ENCODE measurements at regions of chr2 and their contacts with region 1.

Region 1: DNA sequence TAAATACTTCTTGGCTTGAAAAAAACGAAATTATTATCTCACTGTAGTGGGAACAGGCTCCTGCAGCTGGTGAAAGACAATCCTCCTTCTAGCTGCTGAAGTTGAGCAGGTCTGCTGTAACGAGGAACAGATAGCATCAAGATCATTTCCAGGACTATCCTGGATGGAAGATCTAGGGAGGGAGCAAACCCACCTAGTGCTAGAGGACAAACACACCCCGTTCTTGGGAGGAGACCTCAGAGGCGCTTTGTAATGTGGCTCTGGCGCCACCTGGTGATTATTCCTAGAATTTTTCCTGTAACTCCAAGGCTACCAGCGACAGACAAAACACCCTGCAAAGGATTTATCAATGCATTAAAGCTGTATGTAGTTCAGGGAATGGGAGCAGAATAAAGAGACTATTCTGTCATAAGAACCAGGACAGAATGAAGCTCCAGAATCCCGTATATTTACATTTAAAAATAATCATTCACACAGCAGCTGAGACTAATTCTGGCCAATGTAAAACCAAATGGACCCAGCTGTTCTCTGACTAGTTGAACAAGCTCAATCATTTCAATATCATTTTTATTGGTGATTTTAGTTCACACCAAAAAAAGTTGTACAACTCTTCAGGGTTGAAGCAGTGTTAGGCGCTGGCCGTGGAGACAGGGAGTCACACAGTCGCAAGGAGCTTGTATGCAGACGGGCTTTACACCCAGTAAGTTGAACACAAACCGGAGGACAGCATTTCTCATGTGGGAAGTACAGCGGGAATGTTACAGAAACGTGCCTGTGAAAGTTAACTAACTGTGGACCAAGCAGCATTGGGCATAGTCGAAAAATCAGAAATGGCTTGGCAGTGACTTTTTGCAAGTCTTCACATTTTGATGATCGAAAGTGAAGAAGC is 290.3 kb downstream of the TRIB2 start:
- DNase-seq: peak; percentile 78
- ATAC-seq: peak; percentile 85
- H3K4me3 Mint-ChIP-seq: no peak overlapping the region
- H3K27ac Mint-ChIP-seq: no peak overlapping the region
- H3K4me1 Mint-ChIP-seq: peaks cover 6% of the 10 kb centered on the region
- H3K27me3 Mint-ChIP-seq: peaks cover 36% of the 10 kb centered on the region

Region 2: GRCh38 chr2:12728221-12728777 is 278.8 kb before region 1 on chr2:
- CTCF ChIA-PET with region 1: interaction called, 46 read pairs
- POLR2A ChIA-PET with region 1: no interaction called
- DNase-seq: peak; percentile 89
- ATAC-seq: peak; percentile 90
- H3K4me3 Mint-ChIP-seq: peak overlapping the region; percentile 67
- H3K27ac Mint-ChIP-seq: peak overlapping the region; percentile 86
- H3K4me1 Mint-ChIP-seq: peaks cover 85% of the 10 kb centered on the region
- H3K27me3 Mint-ChIP-seq: no peaks in the 10 kb centered on the region

Region 3: DNA sequence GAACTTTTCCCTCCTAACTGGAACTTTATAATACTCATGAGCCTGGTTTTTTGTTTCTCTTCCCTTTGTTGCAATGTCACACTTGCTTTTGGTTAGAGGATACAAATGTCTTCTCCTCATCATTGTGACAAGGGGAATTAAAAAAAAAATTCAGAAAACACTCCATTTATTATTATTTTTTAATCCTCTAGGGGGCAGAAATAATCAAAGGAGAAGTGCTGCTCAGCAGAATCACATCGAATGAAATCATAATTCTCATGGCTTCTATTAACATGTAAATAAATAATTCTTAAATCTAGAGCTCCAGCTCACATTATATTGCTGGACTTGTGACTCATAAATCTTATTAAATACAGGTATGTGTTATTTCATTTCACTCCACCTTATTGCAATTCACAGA is 16.6 kb before region 1 on chr2:
- CTCF ChIA-PET with region 1: interaction called, 23 read pairs
- POLR2A ChIA-PET with region 1: no interaction called
- DNase-seq: no peak
- ATAC-seq: no peak
- H3K4me3 Mint-ChIP-seq: no peak overlapping the region
- H3K27ac Mint-ChIP-seq: no peak overlapping the region
- H3K4me1 Mint-ChIP-seq: peaks cover 15% of the 10 kb centered on the region
- H3K27me3 Mint-ChIP-seq: peaks cover 25% of the 10 kb centered on the region

Region 4: GRCh38 chr2:13091455-13091854 is 84.4 kb after region 1 on chr2:
- CTCF ChIA-PET with region 1: no interaction called
- POLR2A ChIA-PET with region 1: no interaction called
- DNase-seq: no peak
- ATAC-seq: no peak
- H3K4me3 Mint-ChIP-seq: no peak overlapping the region
- H3K27ac Mint-ChIP-seq: no peak overlapping the region
- H3K4me1 Mint-ChIP-seq: no peaks in the 10 kb centered on the region
- H3K27me3 Mint-ChIP-seq: peaks cover 4% of the 10 kb centered on the region